Activated CD4-positive, alpha-beta memory T cell treated with anti-CD3 and anti-CD28 coated beads, Interleukin-2, amount 10 ng/mL, durations not matched to agents 7 days and 5 days (primary cell): ENCODE measurements at regions of chr19 and their contacts with region 1.

Region 1: GRCh38 chr19:17511724-17512573 is 500 bp downstream of the PGLS start:
- DNase-seq: peak; percentile 85
- H3K4me3 Mint-ChIP-seq: peak overlapping the region; percentile 99
- H3K27ac Mint-ChIP-seq: peak overlapping the region; percentile 99
- H3K4me1 Mint-ChIP-seq: peaks cover 37% of the 10 kb centered on the region
- H3K27me3 Mint-ChIP-seq: no peaks in the 10 kb centered on the region

Region 2: DNA sequence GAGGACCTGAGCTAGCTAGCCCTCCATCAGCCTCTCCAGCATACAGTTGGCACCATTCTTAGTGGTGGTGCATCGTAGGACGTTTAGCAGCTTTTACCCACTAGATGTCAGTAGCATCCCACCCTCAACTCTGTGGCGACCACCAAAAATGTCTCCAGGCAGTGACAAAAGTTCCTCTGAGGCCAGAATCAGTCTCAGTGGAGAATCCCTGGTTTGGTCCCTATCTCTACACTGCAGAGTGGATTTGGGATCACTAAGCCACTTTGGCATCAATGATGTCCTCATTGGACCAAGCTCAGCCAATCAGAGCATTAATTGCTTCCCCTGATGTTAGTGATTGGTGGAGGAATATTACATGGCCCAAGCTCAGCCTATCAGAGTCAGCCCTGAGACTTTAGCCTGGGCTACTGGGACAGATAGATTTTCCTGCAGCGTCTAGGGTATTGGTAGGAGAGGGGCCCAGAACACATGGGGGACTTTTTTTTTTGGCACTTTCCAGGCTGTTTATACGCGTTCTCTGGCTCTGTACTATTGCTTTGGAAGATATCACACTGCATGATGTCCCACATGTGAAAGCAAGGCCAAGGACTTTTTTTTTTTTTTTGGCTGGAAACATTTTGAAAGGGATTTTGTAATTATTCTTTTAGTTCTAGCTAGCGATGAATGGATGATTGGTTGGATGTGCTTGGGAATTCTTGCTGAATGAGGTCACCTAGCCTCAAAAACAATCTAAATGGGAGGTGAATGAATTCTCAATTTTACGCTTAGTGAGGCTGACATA is 70.5 kb before region 1 on chr19:
- CTCF ChIA-PET with region 1: no interaction called
- POLR2A ChIA-PET with region 1: no interaction called
- DNase-seq: no peak
- H3K4me3 Mint-ChIP-seq: no peak overlapping the region
- H3K27ac Mint-ChIP-seq: no peak overlapping the region
- H3K4me1 Mint-ChIP-seq: no peaks in the 10 kb centered on the region
- H3K27me3 Mint-ChIP-seq: no peaks in the 10 kb centered on the region

Region 3: DNA sequence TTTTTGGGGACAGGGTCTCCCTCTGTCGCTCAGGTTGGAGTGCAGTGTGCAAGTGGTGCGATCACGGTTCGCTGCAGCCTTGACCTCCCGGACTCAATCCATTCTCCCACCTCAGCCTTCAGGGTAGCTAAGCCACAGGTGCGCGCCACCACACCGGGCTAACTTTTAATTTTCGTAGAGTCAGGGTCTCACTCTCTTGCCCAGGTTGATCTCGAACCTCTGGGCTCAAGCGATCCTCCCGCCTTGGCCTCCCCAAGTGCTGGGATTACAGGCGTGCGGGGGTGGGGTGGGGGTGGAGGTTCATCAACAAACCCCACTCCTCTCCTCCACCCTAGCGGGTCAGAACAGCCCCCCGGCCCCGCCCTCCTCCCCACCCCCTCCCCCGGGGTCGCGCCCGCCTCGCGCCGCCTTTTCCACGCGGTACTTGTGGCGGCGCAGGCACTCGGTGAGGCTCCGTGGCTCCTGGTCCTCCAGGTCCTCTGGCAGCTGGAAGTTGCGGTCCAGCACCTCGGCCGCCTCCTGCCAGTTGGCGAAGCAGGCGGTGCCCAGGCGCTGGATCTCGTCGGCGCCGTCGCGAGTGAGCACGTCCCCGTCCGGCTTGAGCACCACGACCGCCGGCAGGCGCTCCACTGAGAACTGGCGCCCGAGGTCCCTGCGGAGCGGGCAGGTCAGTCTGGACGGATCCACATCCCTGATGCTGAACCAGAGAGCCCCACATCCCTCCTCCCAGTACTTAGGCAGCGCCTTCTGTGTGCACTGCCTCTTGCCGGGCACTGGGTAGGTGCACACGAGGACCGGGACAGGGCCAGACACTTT is 56.4 kb before region 1 on chr19:
- CTCF ChIA-PET with region 1: no interaction called
- POLR2A ChIA-PET with region 1: no interaction called
- DNase-seq: no peak
- H3K4me3 Mint-ChIP-seq: no peak overlapping the region
- H3K27ac Mint-ChIP-seq: no peak overlapping the region
- H3K4me1 Mint-ChIP-seq: peaks cover 8% of the 10 kb centered on the region
- H3K27me3 Mint-ChIP-seq: peaks cover 35% of the 10 kb centered on the region

Region 4: GRCh38 chr19:17496337-17496997 is 15.5 kb before region 1 on chr19:
- CTCF ChIA-PET with region 1: interaction called, 23 read pairs
- POLR2A ChIA-PET with region 1: interaction called, 8 read pairs
- DNase-seq: peak; percentile 85
- H3K4me3 Mint-ChIP-seq: no peak overlapping the region
- H3K27ac Mint-ChIP-seq: no peak overlapping the region
- H3K4me1 Mint-ChIP-seq: peaks cover 28% of the 10 kb centered on the region
- H3K27me3 Mint-ChIP-seq: no peaks in the 10 kb centered on the region

Region 5: DNA sequence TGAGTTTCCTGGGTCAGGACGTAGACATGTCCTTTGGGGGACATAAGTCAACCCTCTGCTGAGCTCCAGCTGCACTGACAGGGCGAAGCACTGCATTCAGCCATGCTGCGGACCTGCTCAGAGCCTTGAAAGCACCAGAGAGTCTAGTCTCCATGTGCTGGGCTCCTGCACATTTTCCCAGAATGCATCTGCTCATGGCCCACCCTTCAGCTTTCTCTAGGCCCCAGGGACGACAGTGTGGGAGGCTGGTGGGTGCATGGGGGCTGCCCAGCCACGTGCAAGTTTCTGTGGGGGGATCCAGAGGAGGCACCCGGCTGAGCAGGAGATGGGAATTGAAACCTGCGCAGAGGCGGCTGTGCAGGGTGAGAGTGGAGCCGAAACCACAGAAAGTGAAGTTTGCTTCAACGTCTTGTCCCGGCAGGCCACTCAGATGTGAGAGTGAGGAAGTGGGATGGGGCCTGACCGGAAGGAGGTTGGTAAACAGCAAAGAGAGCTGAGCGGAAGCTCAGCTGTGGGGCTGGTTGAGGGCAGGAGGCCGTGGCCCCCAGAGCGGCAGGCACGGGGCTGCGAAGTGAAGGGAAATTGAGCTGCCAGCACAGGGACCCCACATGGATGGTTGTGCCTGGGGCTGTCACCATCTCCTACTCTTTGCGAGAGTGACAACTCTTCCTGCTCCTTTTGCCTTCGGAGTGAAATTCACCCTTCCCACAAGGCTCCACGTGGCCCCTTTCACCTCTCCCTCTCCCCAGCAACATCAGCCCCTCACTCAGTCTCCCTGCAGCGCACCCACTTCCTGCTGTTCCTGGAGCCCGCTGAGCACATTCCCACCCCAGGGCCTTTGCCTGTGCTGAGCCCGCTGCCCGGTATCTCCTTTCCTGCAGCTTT is 11.3 kb after region 1 on chr19:
- CTCF ChIA-PET with region 1: interaction called, 4 read pairs
- POLR2A ChIA-PET with region 1: interaction called, 17 read pairs
- DNase-seq: peak; percentile 78
- H3K4me3 Mint-ChIP-seq: peak overlapping the region; percentile 54
- H3K27ac Mint-ChIP-seq: peak overlapping the region; percentile 73
- H3K4me1 Mint-ChIP-seq: peaks cover 24% of the 10 kb centered on the region
- H3K27me3 Mint-ChIP-seq: peaks cover 2% of the 10 kb centered on the region

Region 6: GRCh38 chr19:17555480-17555928 is 43.6 kb after region 1 on chr19 and contains the start of gene COLGALT1:
- CTCF ChIA-PET with region 1: no interaction called
- POLR2A ChIA-PET with region 1: interaction called, 11 read pairs
- DNase-seq: peak; percentile 99
- H3K4me3 Mint-ChIP-seq: peak within 1 kb of the TSS; percentile 86
- H3K27ac Mint-ChIP-seq: peak within 1 kb of the TSS; percentile 72
- H3K4me1 Mint-ChIP-seq: peaks cover 25% of the 10 kb centered on the region
- H3K27me3 Mint-ChIP-seq: no peaks in the 10 kb centered on the region
- total RNA-seq, gene COLGALT1: 36.1 to 38.9 TPM

Region 7: DNA sequence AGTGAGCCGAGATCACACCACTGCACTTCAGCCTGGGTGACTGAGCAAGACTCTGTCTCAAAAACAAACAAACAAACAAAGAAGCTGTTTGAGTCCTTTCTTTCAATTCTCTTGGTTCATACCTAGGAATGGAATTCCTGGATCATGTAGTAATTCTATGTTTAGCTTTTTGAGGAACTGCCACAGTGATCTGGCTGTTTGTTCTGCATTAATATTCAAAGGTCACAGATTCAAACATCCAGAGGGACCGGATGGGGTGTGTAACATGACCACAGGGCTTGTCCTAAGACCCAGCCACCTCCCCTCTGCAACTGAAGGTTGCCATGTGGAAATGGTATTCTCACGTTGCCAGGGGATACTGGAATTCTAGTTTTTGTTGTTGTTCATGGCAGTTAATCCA is 53.7 kb after region 1 on chr19:
- CTCF ChIA-PET with region 1: no interaction called
- POLR2A ChIA-PET with region 1: no interaction called
- DNase-seq: no peak
- H3K4me3 Mint-ChIP-seq: no peak overlapping the region
- H3K27ac Mint-ChIP-seq: no peak overlapping the region
- H3K4me1 Mint-ChIP-seq: no peaks in the 10 kb centered on the region
- H3K27me3 Mint-ChIP-seq: no peaks in the 10 kb centered on the region